Mammary epithelial cell (primary cell): ENCODE measurements at regions of chr19 and their contacts with region 1.

Region 1: DNA sequence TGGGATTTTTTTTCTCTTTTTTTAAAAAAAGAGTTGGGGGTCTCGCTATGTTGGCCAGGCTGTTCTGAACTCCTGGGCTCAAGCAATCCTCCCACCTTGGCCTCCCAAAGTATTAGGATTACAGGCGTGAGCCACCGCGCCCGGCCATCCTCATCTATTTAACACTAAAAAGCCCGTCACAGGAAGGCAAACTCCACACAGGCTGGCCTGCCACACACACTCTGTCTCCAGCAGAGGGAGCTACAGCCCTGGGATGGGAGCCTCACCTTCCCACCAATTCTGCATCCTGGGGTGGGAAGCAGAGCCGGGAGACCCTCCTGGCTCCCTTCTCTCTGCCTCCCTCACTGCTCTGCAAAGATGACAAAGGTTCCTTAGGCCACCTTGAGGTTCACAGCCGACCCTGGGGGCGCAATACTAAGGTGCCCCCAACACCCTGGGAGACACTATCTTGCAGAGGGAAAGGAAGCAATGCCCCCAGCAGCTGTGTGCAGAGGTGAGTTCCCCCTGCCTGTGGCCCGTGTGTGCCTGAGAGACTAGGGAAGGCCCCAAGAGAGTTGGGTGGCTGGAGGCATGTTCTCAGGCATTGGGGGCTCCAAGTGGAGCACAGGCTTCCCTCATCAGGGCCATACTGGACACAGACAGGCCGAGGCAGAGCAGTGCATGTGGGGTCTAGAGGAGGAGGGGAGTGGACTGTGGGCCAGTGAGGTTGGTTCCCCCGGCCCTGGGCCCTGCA is 27.4 kb upstream of the TIMM44 start:
- DNase-seq: no peak
- H3K4me3 ChIP-seq: no peak overlapping the region
- H3K27ac ChIP-seq: no peak overlapping the region
- H3K4me1 ChIP-seq: no peaks in the 10 kb centered on the region
- H3K27me3 ChIP-seq: no peaks in the 10 kb centered on the region
- CTCF ChIP-seq: peak; percentile 79 to 86

Region 2: GRCh38 chr19:7888145-7888825 is 82.6 kb before region 1 on chr19 and contains the start of gene LRRC8E:
- CTCF ChIA-PET with region 1: no interaction called
- dilution Hi-C with region 1: loop called (anchors 5 kb)
- in situ Hi-C with region 1: no loop called
- intact Hi-C with region 1: no loop called
- DNase-seq: peak; percentile 71
- H3K4me3 ChIP-seq: peak within 1 kb of the TSS; percentile 49 to 68 (median 60)
- H3K27ac ChIP-seq: peak within 1 kb of the TSS; percentile 51
- H3K4me1 ChIP-seq: peaks cover 3% of the 10 kb centered on the region
- H3K27me3 ChIP-seq: no peaks in the 10 kb centered on the region
- CTCF ChIP-seq: no peak
- total RNA-seq, gene LRRC8E: 8.5 to 14.2 TPM

Region 3: DNA sequence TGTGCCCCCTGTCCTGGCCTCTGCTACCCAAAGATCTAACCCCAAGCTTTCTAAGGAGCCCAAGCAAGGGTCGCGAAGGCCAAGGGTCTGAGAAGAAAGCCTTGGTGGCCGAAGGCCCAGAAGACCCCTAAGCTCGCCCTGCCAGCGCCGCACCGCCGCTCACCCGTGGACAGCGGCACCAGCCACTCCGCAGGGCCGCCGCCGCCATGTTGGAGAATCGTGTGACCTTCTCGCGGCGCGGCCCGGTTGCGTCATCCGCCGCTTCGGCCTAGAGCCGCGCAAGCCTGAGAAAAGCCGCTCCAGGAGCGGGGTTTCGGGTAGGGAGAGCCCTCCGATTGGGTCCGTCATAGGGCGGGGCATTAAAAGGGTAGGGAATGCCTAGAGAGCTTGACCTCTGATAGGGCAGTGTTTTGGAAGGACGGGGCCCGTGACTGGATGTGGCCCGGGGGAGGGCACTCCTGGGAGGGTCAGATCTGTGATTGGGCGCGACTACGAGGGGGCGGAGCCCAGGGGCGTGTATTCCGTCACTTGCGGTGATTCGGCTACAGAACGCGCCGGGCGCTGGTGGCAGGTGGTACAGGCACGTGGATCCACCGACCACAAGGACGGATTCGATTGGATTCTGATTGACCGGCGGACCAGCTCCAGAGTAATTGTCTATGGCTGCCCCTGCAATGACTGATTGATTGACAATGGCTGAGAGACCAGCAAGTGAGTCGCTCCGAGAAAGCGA is 27.3 kb before region 1 on chr19 and contains the start of gene TIMM44:
- CTCF ChIA-PET with region 1: no interaction called
- dilution Hi-C with region 1: no loop called
- in situ Hi-C with region 1: no loop called
- intact Hi-C with region 1: loop called (anchors 2 kb)
- DNase-seq: peak; percentile 100
- H3K4me3 ChIP-seq: peak within 1 kb of the TSS; percentile 89 to 97 (median 93)
- H3K27ac ChIP-seq: peak within 1 kb of the TSS; percentile 98
- H3K4me1 ChIP-seq: peaks cover 7% of the 10 kb centered on the region
- H3K27me3 ChIP-seq: no peaks in the 10 kb centered on the region
- CTCF ChIP-seq: no peak
- total RNA-seq, gene TIMM44: 52.7 to 94.3 TPM

Region 4: DNA sequence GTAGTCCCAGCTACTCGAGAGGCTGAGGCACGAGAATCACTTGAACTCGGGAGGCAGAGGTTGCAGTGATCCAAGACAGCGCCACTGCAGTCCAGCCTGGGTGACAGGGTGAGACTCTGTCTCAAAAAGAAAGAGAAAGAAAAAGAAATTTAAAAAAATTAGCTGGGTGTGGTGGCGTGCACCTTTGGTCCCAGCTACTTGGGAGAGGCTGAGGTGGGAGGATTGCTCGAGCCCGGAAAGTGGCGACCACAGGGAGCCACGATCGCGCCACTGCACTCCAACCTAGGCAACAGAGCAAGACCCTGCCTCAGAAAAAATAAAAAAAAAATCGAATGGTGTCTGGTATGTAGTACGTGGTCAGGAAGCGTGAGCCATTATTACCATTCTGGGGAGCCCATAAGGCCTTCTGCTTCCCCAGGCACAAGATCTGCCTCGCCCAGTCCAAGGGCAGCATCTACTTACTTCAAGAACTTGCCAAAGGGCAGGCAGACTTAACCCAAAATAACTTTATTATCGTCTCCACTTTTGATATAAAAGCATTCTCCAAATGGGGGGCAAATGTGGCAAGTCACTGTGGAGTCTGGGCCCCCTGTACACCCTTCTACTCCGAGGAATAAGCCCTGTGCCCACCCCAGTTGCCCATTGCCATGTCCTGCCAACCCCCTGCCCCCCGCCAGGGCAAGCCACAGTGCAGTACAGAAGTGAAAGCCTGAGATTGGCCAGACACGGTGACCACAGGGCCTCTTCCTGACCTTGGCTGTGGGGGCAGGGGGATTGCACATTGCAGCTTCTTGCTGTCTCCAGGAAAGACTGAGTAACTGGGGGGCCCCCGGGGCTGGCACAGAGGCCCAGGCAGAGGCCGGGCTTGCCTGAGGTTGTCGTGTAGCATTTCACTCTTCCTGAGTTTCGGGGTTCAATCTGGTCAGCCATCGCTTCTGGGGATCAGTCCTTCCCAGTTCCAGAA is 94.3 kb after region 1 on chr19:
- CTCF ChIA-PET with region 1: no interaction called
- dilution Hi-C with region 1: loop called (anchors 5 kb)
- in situ Hi-C with region 1: no loop called
- intact Hi-C with region 1: no loop called
- DNase-seq: no peak
- H3K4me3 ChIP-seq: no peak overlapping the region
- H3K27ac ChIP-seq: no peak overlapping the region
- H3K4me1 ChIP-seq: no peaks in the 10 kb centered on the region
- H3K27me3 ChIP-seq: no peaks in the 10 kb centered on the region
- CTCF ChIP-seq: no peak

Region 5: DNA sequence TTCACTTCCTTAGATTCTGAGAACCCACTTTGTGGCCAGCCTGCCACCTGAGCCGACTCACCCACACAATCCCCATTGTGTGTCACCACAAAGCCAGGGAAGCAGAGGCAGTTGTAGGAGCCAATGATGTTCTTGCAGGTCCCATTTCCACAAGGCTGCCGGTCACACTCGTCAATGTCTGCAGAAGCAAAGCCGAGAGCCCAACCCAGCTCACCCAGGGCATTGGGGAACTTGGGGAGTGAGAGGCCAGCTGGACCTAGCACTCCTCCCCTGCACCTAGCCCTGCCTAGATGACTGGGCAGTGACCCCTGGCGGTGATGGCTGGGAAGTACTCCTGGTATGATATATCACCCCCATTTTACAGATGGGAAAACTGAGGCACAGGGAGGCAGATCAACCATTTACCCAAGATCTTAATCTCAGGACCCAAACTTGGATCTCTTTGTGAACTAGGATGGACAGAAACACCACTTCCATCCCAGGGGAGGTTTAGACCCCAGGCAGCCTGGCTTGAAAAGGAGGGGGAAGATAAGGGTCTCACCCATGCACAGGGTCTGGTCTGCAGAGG is 125.1 kb after region 1 on chr19:
- CTCF ChIA-PET with region 1: no interaction called
- dilution Hi-C with region 1: no loop called
- in situ Hi-C with region 1: no loop called
- intact Hi-C with region 1: no loop called
- DNase-seq: no peak
- H3K4me3 ChIP-seq: no peak overlapping the region
- H3K27ac ChIP-seq: no peak overlapping the region
- H3K4me1 ChIP-seq: no peaks in the 10 kb centered on the region
- H3K27me3 ChIP-seq: no peaks in the 10 kb centered on the region
- CTCF ChIP-seq: no peak

Region 6: DNA sequence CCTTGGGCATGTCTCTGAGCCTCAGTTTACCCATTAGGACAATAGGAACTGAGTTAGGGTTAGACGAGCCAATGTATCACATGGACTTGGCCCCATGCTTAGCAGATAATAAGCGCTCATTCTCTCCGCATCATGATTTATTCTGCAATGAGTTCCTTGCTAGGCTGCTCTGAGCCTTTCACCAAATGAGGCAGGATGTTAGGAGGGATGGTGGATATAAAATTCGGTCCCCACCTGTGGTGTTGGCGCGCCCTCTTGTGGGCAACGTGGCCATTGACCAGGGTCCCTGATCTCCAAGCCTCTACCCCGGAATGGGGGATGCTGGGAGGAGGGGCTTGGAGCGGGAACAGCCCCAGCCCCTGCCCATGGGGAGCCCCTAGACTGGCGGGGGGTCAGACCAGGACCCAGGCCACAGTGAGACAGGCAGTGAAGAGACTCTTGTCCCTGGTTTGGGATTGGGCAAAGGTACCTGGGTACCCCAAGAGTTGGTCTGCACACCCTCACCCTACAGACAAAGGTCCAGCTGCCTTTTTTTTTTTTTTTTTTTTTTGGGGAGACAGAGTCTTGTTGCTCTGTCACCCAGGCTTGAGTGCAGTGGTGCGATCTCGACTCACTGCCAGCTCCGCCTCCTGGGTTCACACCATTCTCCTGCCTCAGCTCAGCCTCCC is 282.2 kb after region 1 on chr19:
- CTCF ChIA-PET with region 1: no interaction called
- dilution Hi-C with region 1: no loop called
- in situ Hi-C with region 1: loop called in 1 of 2 experiments (anchors 25 kb)
- intact Hi-C with region 1: loop called (anchors 1 kb)
- DNase-seq: peak; percentile 54
- H3K4me3 ChIP-seq: no peak overlapping the region
- H3K27ac ChIP-seq: no peak overlapping the region
- H3K4me1 ChIP-seq: peaks cover 3% of the 10 kb centered on the region
- H3K27me3 ChIP-seq: no peaks in the 10 kb centered on the region
- CTCF ChIP-seq: peak; percentile 82 to 94